ENCODE measurements at regions of chr3 and their contacts with region 1.

Region 1: DNA sequence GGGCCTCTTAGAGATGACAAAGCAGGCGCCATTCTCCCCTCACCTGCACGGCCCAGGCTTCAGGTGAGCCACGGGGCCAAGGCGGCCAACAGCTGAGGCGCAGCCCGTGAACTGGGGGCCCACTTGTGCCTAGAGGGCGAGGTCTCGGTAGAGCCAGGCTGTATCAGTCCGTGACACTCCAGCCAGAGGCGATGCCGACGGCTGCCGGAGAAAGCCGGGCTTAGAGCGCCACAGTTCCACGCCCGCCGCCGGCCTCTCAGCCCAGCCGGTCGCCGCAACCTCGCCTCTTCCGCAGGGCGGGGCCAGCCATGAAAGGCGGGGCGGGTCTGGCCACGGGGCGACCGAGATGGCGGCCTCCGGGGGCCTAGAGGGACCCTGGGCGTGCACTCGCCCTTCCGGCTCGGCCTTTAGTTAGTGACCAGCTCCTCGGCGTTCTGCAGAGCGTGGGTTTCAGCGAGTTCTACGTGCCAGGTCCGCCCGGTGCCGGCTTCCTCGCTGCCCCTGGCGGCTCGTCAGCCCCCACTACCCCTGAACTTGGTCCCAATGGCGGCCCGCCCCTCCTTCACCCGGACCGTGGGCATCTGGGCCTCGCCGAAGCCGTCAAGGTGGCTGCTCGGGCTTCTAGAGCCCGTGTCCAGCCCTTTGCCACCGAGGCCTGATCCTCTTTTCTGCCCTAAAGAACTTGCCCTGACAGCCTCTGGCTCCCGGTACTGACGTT is at the start of gene ZNF621:
- DNase-seq: peak; percentile 75 to 93
- H3K4me3 ChIP-seq: peak within 1 kb of the TSS; percentile 85
- H3K27ac ChIP-seq: peak within 1 kb of the TSS; percentile 79
- H3K4me1 ChIP-seq: peaks cover 10% of the 10 kb centered on the region; the same call in 1 of the 2 replicates
- H3K27me3 ChIP-seq: no peaks in the 10 kb centered on the region
- CTCF ChIP-seq: no peak
- total RNA-seq, gene ZNF621: 21.1 and 26.2 TPM in 2 replicates

Region 2: DNA sequence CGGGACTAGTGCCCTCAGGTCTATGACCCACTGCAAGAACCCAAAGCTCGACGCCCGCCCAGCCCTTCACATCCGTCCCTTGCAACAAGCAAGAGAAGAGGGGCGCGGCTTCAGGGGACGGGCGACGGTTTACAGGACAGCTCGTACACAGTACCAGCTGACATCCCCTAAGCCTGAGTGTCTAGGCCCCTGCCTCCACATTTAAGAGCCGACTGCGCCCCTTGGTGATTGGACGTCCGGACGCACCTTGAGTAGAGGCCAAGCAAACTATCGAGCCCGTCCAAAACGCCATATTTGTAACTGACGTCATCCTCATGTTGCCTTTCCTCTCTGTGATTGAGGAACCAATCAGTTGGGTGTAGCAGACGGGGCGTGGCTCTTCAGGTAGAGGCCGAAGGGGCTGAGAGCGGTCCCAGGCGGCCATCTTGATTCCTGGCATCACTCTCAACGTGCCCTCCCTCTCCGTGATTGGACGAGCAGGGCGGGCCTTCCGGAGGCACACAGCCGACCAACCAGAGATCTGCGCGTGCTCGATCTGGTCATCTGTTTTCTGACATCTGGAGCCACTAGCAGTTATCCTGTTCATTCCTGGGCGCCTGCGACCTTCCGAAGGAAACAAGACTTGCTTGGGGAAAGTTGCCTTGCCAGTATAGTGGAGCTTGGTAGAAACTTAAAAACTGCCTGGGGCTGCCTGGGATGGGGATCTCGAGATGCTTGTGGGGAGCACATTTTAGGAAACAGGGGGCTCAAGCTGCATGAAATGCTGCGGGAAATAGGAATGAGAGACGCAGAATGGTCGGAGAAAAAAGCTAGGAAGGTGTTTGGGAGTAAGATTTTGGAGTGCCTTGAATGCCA is 71.6 kb before region 1 on chr3:
- CTCF ChIA-PET with region 1: no interaction called
- POLR2A ChIA-PET with region 1: interaction called, 5 read pairs
- intact Hi-C with region 1: loop called (anchors 1 kb)
- DNase-seq: peak; percentile 95 to 97
- H3K4me3 ChIP-seq: peak overlapping the region; percentile 59
- H3K27ac ChIP-seq: peak overlapping the region; percentile 52
- H3K4me1 ChIP-seq: peaks cover 33% of the 10 kb centered on the region
- H3K27me3 ChIP-seq: no peaks in the 10 kb centered on the region
- CTCF ChIP-seq: no peak

Region 3: DNA sequence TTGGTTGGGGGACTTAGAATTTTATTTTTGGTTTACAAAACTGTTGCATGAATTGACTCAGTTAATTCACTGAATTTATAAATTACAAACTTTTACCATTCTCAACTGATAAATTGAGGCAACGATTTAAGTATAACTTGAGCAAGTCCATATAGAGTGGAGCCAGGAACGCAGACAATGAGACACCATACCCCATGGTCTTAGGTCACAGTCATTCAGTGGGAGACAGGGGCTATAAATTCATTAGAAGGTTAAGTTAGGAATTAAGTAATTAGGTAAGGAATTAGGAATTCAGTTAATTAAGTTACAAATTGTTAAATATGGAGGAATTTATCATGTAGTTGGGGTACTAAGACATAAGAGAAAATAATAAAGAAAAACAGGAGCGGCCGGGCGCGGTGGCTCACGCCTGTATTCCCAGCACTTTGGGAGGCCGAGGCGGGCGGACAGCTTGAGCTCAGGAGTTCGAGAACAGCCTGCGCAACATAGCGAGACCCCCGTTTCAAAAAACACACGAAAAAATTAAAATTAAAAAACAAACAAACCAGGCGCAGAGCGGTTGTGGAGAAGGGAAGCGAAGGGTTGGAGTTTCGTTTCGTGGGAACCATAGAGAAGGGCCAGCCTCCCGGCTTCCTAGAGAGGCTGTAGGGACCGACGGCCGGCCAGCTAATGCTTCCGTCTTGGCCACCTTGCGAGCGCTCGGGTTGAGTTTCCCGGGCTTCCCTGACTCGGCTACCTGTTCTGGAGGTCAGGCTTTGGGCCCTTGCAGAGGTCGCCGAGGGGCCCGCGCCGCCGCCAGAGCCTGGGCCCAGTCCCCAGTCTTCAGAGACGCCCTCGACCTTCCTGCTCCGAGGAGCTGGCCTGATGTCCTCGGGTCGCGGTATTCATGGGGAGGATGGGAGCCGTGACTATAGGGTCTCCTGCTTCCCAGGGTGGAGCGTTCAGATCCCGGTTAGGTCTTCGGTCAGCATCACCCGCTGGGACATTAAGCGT is 48.0 kb before region 1 on chr3 and contains the start of gene ZNF619:
- CTCF ChIA-PET with region 1: no interaction called
- POLR2A ChIA-PET with region 1: no interaction called
- intact Hi-C with region 1: loop called (anchors 1 kb)
- DNase-seq: peak; percentile 51 to 66
- H3K4me3 ChIP-seq: peak within 1 kb of the TSS; percentile 67
- H3K27ac ChIP-seq: no peak within 1 kb of the TSS
- H3K4me1 ChIP-seq: peaks cover 12% of the 10 kb centered on the region
- H3K27me3 ChIP-seq: no peaks in the 10 kb centered on the region
- CTCF ChIP-seq: no peak
- total RNA-seq, gene ZNF619: 5.1 and 6.9 TPM in 2 replicates

Region 4: GRCh38 chr3:40505599-40506462 is 18.9 kb before region 1 on chr3 and contains the start of gene ZNF620:
- CTCF ChIA-PET with region 1: no interaction called
- POLR2A ChIA-PET with region 1: no interaction called
- intact Hi-C with region 1: loop called (anchors 1 kb)
- DNase-seq: peak; percentile 40 to 73
- H3K4me3 ChIP-seq: peak within 1 kb of the TSS; percentile 70
- H3K27ac ChIP-seq: no peak within 1 kb of the TSS
- H3K4me1 ChIP-seq: peaks cover 19% of the 10 kb centered on the region
- H3K27me3 ChIP-seq: no peaks in the 10 kb centered on the region
- CTCF ChIP-seq: no peak; the same call in 1 of the 2 replicates
- total RNA-seq, gene ZNF620: 4.1 and 4.7 TPM in 2 replicates

Measured in PC-9 (cell line).